Left cardiac atrium (tissue), 4 donors: ENCODE measurements at regions of chr11 and their contacts with region 1.

Region 1: DNA sequence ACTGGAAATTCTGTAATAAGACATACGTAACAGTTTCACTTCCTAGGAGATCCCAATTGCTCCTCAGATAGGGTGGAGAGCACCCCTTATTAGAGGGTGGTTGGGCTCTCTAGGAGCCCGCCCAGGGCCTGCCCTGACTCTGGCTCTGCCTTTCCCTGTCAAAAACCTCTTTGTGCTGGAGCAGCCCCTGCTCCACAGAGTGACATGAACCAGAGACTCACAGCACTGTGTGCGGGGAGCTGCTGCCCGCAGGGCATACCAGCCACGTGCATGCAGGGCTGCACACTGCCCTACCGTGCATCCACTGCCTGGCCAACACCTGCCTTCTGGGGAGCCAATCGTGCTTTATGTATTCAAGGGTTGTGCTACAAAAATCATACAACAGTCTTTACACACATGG is 24.3 kb downstream of the KCNQ1OT1 start:
- DNase-seq: peak; percentile 11
- ATAC-seq: peak in 1 of 2 donors; percentile 32

Region 2: GRCh38 chr11:2561696-2562581 is 113.6 kb before region 1 on chr11:
- intact Hi-C with region 1: loop called in 1 of 2 experiments (anchors 10 kb)
- DNase-seq: peak; percentile 19
- ATAC-seq: peak; percentile 22 to 28

Region 3: DNA sequence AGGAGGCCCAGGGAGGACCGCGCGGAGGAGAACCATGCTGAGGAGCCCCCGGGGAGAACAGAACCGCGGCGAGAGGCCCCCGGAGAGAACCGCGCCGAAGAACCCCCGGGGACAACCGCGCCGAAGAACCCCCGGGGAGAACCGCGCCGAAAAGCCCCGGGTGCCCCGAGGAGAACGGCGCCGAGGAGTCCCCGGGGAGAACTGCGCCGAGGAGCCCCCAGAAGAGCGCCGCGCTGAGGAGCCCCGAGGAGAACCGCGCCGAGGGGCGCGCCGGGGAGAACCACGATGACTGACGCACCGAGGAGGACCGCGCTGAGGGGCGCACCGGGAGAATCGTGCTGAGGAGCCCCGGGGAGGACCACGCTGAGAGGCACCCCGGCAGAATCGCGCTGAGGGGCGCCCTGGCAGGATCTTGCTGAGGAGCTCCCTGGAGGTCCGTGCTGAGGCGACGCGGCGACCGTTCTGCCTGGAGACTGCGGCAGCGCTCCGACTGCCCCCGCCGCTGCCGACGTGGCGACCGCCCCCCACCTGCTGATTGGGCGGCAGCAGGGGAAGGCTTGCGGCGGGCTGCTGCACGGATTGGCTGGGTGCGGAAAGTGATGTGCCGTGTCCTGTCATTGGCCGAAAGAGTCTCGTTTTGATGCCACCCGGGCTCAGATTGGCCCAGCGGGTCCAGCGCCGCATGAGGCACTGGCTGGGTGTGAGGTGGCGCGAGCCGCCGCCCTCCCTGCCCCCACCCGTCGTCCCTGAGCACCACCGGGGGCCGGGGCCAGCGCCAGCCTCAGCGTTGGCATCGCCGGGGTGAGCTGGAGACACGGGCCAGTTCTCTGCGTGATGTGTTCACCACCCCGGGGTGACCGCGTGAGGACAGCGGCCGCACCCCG is 24.2 kb after region 1 on chr11 and contains the start of gene KCNQ1OT1:
- intact Hi-C with region 1: no loop called
- DNase-seq: peak; percentile 92
- ATAC-seq: peak; percentile 96
- total RNA-seq, gene KCNQ1OT1: 0.59 to 0.81 TPM

Region 4: GRCh38 chr11:2799881-2800654 is 124.5 kb after region 1 on chr11:
- intact Hi-C with region 1: no loop called
- DNase-seq: peak; percentile 14
- ATAC-seq: no peak

Region 5: GRCh38 chr11:2837096-2837601 is 161.6 kb after region 1 on chr11:
- intact Hi-C with region 1: no loop called
- DNase-seq: peak; percentile 84
- ATAC-seq: peak; percentile 87 to 88